Adrenal gland (tissue), 19 donors: ENCODE measurements at regions of chr19 and their contacts with region 1.

Region 1: GRCh38 chr19:17079710-17080439 is 4.3 kb downstream of the MYO9B start:
- DNase-seq: peak; percentile 72 to 95 (median 93)
- H3K4me3 ChIP-seq: peak overlapping the region in 2 of 4 donors; percentile 5 to 43
- H3K27ac ChIP-seq: peak overlapping the region; percentile 79 to 97 (median 95)
- H3K4me1 ChIP-seq: peaks cover 20 to 52% of the 10 kb centered on the region in 2 donors
- H3K27me3 ChIP-seq: no peaks in the 10 kb centered on the region
- CTCF ChIP-seq: peak; percentile 40 to 84 (median 79)
- POLR2A ChIP-seq: peak in 1 of 2 donors; percentile 90

Region 2: DNA sequence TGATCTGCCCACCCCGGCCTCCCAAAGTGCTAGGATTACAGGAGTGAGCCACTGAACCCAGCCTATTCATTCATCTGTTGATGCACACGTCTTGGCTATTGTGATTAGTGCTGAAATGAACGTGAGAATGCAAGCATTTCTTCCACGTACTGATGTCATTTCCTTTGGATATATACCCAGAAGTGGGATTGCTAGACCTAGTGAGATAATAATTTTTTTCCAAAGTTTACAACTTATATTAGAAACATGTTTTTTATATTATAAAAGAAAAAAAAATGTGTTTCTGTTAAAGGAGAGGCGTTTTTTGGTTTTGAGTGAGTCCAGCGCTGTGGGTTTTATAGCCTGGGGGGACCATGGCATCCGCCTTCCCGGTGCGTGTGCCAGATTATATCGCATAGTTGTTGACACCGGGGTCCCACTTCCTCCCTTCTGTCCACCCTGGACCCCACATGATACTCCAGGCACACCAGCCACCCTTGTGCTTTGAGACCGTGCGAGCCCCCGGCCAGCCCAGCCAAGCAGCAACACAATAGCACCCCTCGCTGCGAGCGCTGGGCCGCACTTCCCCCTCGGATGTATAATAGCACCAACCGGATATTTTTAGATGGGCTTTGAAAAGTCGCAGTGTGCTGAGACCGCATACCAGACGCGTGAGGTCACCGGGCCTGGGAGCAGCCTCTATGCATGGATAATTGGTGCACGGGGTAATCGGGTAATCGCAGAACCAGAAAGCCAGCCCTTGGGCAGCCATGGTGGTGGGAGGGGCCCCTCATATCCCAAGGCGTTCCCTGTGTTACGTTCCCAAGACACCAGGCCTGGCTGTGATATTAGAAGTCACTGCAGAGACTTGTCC is 55.4 kb after region 1 on chr19:
- intact Hi-C with region 1: loop called in 1 of 2 experiments (anchors 5 kb)
- DNase-seq: peak; percentile 86 to 98 (median 96)
- H3K4me3 ChIP-seq: peak overlapping the region in 1 of 4 donors; percentile 16
- H3K27ac ChIP-seq: peak overlapping the region; percentile 1 to 96 (median 86)
- H3K4me1 ChIP-seq: peaks cover 18 to 35% of the 10 kb centered on the region in 2 donors
- H3K27me3 ChIP-seq: no peaks in the 10 kb centered on the region
- CTCF ChIP-seq: peak in 5 of 6 experiments; percentile 23 to 45 (median 31)
- POLR2A ChIP-seq: peak in 1 of 2 donors; percentile 78